CD4-positive, alpha-beta memory T cell (primary cell): ENCODE measurements at regions of chr12 and their contacts with region 1.

Region 1: DNA sequence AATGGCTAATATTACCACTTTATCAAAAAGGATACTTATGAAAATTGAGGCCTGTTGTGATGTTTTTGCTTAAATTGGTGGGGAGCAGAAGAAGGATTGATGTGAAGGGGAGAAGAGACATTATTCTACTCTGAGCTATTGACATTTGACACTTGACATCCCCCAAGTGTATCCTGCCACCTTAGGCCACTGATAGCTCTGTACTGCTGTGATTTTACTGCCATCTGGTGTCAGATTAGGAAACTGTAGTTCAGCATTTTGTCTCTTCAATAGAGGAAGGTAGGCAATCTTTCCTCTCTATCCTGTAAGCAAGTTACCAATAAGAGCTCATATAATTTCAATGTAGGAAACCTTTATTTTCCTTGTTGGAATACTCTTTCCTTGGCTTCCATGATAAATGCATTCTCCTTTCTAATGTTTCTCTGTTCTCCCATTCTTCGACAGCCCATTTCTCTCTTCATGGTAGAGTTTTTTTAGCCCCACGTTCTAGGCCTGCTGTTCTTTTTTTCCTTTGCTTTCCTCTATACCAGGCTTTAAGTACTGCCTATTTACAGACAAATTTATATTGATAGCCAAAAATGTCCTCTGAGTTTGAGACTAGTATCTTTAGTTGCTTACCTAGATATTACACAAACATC is 46.3 kb downstream of the PPHLN1 start:
- DNase-seq: peak in 4 of 5 donors; percentile 43 to 55 (median 52)
- H3K4me3 ChIP-seq: no peak overlapping the region
- H3K4me3 Mint-ChIP-seq: no peak overlapping the region
- H3K27ac ChIP-seq: no peak overlapping the region
- H3K27ac Mint-ChIP-seq: peak overlapping the region in 2 of 7 donors; percentile 26 to 43
- H3K4me1 ChIP-seq: no peaks in the 10 kb centered on the region
- H3K4me1 Mint-ChIP-seq: peaks cover 0 to 16% (median 7%) of the 10 kb centered on the region in 4 donors
- H3K27me3 ChIP-seq: no peaks in the 10 kb centered on the region
- H3K27me3 Mint-ChIP-seq: no peaks in the 10 kb centered on the region

Region 2: DNA sequence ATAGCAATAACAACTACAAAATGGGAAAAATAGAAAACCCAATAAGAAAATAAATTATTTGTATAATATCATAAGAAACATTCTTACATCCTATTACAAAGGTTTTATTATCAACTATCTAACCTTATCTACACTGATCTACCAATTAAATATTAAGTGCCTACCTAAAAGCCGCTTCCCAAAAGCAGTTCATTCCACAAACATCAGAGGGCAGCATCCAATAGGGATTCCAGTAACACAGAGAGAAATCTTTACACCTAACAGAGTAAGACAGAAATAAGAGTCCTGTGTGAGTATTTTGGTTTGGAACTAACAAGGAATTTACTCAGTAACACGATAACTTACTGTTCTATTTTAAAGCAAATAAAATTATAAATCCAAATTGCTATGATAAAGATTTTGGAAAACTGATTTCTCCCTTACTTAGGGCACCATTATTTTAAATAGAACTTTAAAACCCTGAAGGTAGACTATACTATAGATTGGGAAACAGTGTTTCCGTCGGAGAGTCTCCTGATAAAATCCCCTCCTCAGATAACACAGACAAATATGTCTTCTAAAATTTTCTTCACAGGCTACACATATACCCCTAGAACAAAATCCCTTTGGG is 242.6 kb before region 1 on chr12:
- CTCF ChIA-PET with region 1: interaction called, 18 read pairs
- POLR2A ChIA-PET with region 1: no interaction called
- intact Hi-C with region 1: loop called (anchors 1 kb)
- DNase-seq: peak in 4 of 5 donors; percentile 26 to 37 (median 36)
- H3K4me3 ChIP-seq: no peak overlapping the region
- H3K4me3 Mint-ChIP-seq: no peak overlapping the region
- H3K27ac ChIP-seq: no peak overlapping the region
- H3K27ac Mint-ChIP-seq: no peak overlapping the region
- H3K4me1 ChIP-seq: peaks cover 5% of the 10 kb centered on the region
- H3K4me1 Mint-ChIP-seq: peaks cover 32 to 45% (median 38%) of the 10 kb centered on the region in 4 donors
- H3K27me3 ChIP-seq: no peaks in the 10 kb centered on the region
- H3K27me3 Mint-ChIP-seq: no peaks in the 10 kb centered on the region

Region 3: GRCh38 chr12:42346403-42347002 is 25.8 kb before region 1 on chr12:
- CTCF ChIA-PET with region 1: interaction called, 12 read pairs
- POLR2A ChIA-PET with region 1: no interaction called
- intact Hi-C with region 1: no loop called
- DNase-seq: no peak
- H3K4me3 ChIP-seq: no peak overlapping the region
- H3K4me3 Mint-ChIP-seq: no peak overlapping the region
- H3K27ac ChIP-seq: no peak overlapping the region
- H3K27ac Mint-ChIP-seq: no peak overlapping the region
- H3K4me1 ChIP-seq: peaks cover 26% of the 10 kb centered on the region
- H3K4me1 Mint-ChIP-seq: peaks cover 23 to 43% (median 30%) of the 10 kb centered on the region in 4 donors
- H3K27me3 ChIP-seq: no peaks in the 10 kb centered on the region
- H3K27me3 Mint-ChIP-seq: no peaks in the 10 kb centered on the region

Region 4: GRCh38 chr12:42360747-42361403 is 11.4 kb before region 1 on chr12:
- CTCF ChIA-PET with region 1: interaction called, 21 read pairs
- POLR2A ChIA-PET with region 1: no interaction called
- intact Hi-C with region 1: no loop called
- DNase-seq: no peak
- H3K4me3 ChIP-seq: no peak overlapping the region
- H3K4me3 Mint-ChIP-seq: peak overlapping the region in 1 of 8 donors; percentile 13
- H3K27ac ChIP-seq: no peak overlapping the region
- H3K27ac Mint-ChIP-seq: peak overlapping the region in 2 of 7 donors; percentile 43 to 52
- H3K4me1 ChIP-seq: peaks cover 11% of the 10 kb centered on the region
- H3K4me1 Mint-ChIP-seq: peaks cover 25 to 50% (median 40%) of the 10 kb centered on the region in 4 donors
- H3K27me3 ChIP-seq: no peaks in the 10 kb centered on the region
- H3K27me3 Mint-ChIP-seq: no peaks in the 10 kb centered on the region

Region 5: DNA sequence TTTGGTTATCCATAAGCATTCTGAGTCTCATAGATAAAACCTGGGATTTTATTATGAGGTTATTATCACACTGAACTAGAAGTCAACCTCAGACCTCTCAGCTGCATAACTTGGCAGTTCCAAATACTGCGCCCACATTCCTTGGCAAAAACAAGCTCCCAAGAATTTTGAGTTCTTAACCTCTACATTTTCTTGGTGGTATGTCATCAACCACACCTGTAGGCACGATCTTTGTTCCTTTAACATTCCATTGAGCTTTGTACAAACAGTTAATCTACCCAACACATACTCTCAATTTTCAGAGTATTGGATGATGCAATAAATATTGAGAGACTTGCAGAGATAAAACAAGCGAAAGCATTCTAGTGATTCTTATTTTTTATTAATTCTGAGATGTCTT is 589.1 kb after region 1 on chr12:
- CTCF ChIA-PET with region 1: no interaction called
- POLR2A ChIA-PET with region 1: no interaction called
- intact Hi-C with region 1: no loop called
- DNase-seq: no peak
- H3K4me3 ChIP-seq: no peak overlapping the region
- H3K4me3 Mint-ChIP-seq: no peak overlapping the region
- H3K27ac ChIP-seq: no peak overlapping the region
- H3K27ac Mint-ChIP-seq: no peak overlapping the region
- H3K4me1 ChIP-seq: no peaks in the 10 kb centered on the region
- H3K4me1 Mint-ChIP-seq: no peaks in the 10 kb centered on the region
- H3K27me3 ChIP-seq: no peaks in the 10 kb centered on the region
- H3K27me3 Mint-ChIP-seq: no peaks in the 10 kb centered on the region